Left ventricle myocardium inferior (tissue), 1 donor: ENCODE measurements at regions of chr9 and their contacts with region 1.

Region 1: DNA sequence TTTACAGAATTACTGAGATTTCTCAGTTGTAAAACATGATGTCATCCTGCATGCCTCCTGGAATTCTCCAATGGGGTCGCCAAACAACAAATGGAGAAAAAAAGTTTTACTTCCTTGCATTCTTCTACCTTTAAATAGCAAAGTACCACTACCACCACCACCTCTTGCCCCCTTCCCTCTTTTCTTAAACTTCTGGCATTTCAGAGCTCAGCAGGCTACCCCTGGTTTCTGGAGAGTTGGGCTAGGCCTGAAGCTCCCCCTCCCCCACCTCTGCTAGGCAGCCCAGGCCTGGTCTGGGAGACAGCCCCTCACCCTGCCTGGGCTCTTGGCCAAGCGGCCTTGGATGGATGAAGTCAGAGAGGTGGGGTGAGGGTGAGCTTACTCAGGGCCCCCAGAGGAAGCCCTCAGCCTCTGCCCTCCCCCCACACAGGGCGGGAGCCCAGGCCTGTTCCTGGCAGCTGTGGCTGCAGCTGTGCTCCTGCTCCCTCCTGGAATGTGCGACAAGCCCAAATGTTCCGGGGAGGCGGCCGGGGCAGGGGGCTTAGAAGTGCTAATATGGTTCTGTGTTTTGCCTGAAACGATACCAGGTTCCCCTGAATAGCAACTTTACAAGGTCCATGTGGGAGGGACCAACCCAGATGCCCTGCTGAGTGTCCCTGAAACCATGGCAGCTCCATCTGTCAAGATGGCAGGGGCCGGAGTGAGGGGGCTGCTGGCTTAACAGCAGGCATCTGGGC is 6.0 kb upstream of the CCIN start:
- DNase-seq: peak; percentile 72
- H3K4me3 ChIP-seq: no peak overlapping the region
- H3K27ac ChIP-seq: peak overlapping the region; percentile 83
- H3K4me1 ChIP-seq: peaks cover 43% of the 10 kb centered on the region
- H3K27me3 ChIP-seq: peaks cover 6% of the 10 kb centered on the region
- CTCF ChIP-seq: no peak

Region 2: DNA sequence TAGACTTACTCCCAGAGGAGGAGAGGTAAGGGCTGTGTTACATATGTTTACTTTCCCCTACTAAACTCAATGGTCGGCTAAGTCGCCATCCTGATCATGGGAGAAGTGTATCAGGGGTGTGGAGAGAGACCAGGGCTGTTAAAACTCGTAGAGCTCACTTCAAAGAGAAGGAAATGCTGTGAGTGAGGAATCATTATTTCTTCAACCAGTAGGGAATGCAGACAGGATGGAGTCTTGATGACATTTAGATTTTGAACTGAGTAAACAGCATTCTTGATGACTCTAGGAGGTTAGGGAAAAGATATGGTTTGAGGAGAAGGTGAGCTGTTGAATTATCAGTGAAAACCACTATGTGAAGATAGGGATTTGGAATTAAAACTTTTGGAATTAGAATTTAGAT is 109.2 kb before region 1 on chr9:
- intact Hi-C with region 1: no loop called
- DNase-seq: no peak
- H3K4me3 ChIP-seq: no peak overlapping the region
- H3K27ac ChIP-seq: no peak overlapping the region
- H3K4me1 ChIP-seq: peaks cover 22% of the 10 kb centered on the region
- H3K27me3 ChIP-seq: no peaks in the 10 kb centered on the region
- CTCF ChIP-seq: no peak

Region 3: DNA sequence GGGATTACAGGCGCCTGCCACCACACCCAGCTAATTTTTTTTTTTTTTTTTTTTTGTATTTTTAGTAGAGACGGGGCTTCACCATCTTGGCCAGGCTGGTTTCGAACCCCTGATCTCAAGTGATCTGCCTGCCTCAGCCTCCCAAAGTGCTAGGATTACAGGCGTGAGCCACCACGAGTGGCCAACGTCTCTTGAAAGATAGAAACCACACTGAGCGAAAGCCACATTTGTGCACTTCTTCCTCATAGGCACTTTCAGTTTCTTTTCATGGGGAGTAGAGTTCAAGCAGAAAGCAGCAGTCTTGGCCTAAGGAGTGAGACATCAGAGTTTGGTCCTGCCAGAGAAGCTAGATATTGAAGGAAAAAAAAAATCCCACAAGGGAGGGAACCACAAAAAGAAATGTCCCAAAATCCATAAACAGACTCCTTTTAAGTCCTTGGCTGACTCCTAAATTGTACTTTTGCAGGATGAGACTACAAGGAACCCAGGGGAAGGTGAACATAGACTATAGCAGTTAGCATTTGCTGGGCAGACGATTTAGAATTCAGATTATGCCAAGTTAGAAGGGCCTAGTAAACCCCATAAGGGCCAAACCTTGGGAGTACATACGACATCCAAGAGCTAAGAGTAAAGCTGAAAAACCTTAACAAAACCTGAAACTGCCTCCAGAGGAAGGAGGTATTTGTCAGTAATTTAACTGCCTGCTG is 70.6 kb before region 1 on chr9:
- intact Hi-C with region 1: no loop called
- DNase-seq: no peak
- H3K4me3 ChIP-seq: no peak overlapping the region
- H3K27ac ChIP-seq: peak overlapping the region; percentile 58
- H3K4me1 ChIP-seq: peaks cover 20% of the 10 kb centered on the region
- H3K27me3 ChIP-seq: no peaks in the 10 kb centered on the region
- CTCF ChIP-seq: no peak

Region 4: DNA sequence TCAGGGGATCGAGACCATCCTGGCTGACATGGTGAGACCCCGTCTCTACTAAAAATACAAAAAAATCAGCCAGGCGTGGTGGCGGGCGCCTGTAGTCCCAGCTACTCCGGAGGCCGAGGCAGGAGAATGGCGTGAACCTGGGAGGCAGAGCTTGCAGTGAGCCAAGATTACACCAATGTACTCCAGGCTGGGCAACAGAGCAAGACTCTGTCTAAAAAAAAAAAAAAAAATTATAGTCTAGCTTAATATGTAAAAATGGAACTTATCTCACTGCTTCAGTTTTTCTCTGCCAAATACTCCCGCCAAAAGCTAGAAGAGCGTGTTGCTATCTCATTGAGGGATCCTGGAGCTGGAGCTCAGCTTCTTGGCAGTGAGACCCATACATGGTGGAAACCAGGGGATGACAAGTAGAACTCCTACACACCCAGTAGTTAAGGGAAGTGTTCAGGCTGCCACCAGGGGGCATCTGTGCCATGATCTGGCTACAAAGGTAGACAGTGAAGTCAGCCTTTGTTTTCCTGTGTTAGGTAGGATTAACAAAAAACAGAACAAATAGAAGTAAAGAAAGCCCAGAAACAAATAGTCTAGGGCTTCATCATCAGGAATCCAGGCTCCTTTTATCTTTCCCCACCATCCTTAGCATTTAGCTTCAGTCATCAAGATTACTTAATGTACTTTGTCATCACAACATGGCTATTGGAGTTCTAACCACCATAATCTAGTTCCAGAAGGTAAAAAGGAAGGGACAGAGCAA is 60.3 kb before region 1 on chr9:
- intact Hi-C with region 1: loop called (anchors 5 kb)
- DNase-seq: peak; percentile 79
- H3K4me3 ChIP-seq: no peak overlapping the region
- H3K27ac ChIP-seq: no peak overlapping the region
- H3K4me1 ChIP-seq: no peaks in the 10 kb centered on the region
- H3K27me3 ChIP-seq: no peaks in the 10 kb centered on the region
- CTCF ChIP-seq: peak; percentile 84